ENCODE measurements at regions of chr2 and their contacts with region 1.

Region 1: GRCh38 chr2:100381240-100381639 is 36.2 kb downstream of the CHST10 start:
- DNase-seq: peak; percentile 38 to 76
- ATAC-seq: peak; percentile 28

Region 2: DNA sequence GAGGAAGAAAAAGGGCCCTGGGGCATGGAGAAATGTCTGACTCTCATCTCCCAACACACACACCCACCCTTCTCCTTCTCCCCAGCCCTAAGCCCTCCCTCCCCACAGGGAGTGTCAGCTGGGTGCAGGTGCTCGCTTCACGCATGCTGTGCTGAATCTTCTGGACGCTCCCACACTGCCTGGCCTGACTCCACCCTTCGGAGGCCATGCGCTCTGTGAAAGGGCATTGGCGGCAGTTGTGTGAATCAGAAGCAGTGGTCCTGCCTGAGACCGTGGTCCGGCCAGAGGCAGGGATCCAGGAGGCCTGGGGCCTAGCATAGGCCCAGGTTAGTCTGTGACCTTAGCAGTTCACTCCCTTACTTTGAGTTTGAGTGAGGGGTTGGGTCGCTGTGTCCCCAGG is 116.0 kb before region 1 on chr2:
- intact Hi-C with region 1: loop called in 1 of 2 experiments (anchors 2 kb)
- DNase-seq: no peak
- ATAC-seq: no peak

Region 3: GRCh38 chr2:100482741-100483140 is 101.5 kb after region 1 on chr2:
- intact Hi-C with region 1: no loop called
- DNase-seq: no peak
- ATAC-seq: no peak

Region 4: GRCh38 chr2:100673691-100674485 is 292.6 kb after region 1 on chr2:
- intact Hi-C with region 1: no loop called
- DNase-seq: no peak
- ATAC-seq: no peak

Measured in left colon (tissue), 2 donors.